ENCODE measurements at regions of chr5 and their contacts with region 1.

Region 1: DNA sequence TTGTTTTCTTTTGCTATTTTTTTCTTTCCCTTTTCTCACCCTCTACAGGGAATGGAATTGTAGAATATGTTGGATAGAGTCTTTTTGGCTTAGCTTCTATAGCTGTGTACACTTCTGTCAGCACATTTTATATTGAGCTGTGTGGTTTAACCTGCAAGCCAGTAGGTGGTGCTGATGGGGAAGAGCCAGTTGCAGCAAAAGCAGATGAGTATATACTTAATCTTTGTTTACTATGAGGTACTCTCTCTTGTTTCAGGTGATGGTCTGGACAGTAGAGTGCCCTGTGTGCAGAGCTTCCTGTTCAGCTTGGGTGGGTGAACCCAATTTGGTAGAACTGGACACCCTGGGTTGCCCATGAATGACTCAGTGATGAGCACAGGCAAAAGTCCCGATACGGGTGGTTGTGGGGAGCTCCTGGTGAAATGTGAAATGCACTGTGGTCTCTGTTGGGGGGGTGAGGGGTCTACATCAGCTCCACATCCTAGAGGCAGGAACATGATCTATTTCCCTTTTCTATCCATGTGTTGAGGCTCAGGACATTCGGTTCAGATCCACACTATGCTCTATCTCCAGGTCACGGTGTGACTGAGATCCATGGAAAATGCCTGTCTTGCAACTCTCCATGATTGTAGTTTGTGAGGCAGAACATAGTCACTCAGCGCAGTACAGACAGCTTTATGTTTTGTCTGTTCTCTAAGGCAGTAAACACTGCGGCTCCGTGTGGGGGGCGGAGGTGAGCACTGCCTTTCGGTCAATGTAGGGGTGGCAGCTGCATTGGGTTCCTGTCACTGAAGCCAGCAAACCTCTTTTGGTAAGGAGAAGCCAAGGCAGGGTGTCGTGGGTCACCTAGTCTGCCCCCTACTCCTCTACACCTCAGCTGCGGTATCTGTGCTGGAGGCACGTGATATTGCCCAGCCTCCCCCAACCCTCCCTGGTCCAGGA is 353.2 kb downstream of the PRR16 start:
- DNase-seq: peak in 1 of 2 experiments; percentile 53
- H3K4me3 ChIP-seq: no peak overlapping the region
- H3K27ac ChIP-seq: no peak overlapping the region
- H3K4me1 ChIP-seq: no peaks in the 10 kb centered on the region
- H3K27me3 ChIP-seq: no peaks in the 10 kb centered on the region
- CTCF ChIP-seq: peak in 2 of 3 experiments; percentile 68 to 71; a peak in 3 of 4 replicates
- EP300 ChIP-seq: no peak
- POLR2A ChIP-seq: no peak
- RAD21 ChIP-seq: peak; percentile 84 to 85

Region 2: DNA sequence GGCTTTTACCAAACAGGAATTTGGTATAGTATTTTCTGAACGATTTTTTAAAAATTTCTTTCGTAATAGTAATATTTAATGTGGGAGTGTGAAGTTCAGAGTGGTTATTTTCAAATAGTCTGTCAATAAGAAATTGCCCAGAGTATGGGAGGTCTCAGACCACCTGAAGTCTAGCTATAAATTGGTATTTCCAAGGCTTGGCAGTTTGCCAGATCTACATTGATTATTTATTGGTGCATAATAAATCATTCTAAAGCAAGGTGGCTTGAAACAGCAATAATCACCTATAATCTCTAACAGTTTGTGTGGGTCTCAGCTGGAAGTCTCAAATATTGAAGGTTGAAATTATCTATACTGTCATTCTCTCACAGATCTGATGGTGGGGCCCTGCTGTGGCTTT is 234.7 kb before region 1 on chr5:
- CTCF ChIA-PET with region 1: no interaction called
- POLR2A ChIA-PET with region 1: no interaction called
- DNase-seq: no peak
- H3K4me3 ChIP-seq: no peak overlapping the region
- H3K27ac ChIP-seq: no peak overlapping the region
- H3K4me1 ChIP-seq: no peaks in the 10 kb centered on the region
- H3K27me3 ChIP-seq: no peaks in the 10 kb centered on the region
- CTCF ChIP-seq: no peak
- EP300 ChIP-seq: no peak
- POLR2A ChIP-seq: no peak
- RAD21 ChIP-seq: no peak

Region 3: DNA sequence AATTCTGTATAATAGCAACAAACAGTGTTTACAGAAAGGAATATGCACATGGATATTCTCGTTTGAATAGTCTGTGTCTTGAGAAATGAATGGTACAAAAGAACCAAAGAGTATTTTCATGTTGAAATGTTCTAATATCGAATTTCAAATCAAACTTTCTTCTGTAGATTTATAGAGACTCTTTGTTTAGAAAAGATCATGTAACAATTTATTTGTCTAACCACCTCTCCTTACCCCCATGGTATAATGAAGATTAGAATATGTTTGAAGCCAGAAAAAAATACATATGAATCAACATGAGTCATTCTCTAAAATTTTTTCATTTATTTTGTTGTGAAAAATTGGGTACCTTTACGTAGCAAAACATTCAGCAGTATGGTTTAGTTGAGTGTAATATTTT is 67.6 kb before region 1 on chr5:
- CTCF ChIA-PET with region 1: no interaction called
- POLR2A ChIA-PET with region 1: no interaction called
- DNase-seq: no peak
- H3K4me3 ChIP-seq: no peak overlapping the region
- H3K27ac ChIP-seq: no peak overlapping the region
- H3K4me1 ChIP-seq: no peaks in the 10 kb centered on the region
- H3K27me3 ChIP-seq: no peaks in the 10 kb centered on the region
- CTCF ChIP-seq: no peak
- EP300 ChIP-seq: no peak
- POLR2A ChIP-seq: no peak
- RAD21 ChIP-seq: no peak

Region 4: DNA sequence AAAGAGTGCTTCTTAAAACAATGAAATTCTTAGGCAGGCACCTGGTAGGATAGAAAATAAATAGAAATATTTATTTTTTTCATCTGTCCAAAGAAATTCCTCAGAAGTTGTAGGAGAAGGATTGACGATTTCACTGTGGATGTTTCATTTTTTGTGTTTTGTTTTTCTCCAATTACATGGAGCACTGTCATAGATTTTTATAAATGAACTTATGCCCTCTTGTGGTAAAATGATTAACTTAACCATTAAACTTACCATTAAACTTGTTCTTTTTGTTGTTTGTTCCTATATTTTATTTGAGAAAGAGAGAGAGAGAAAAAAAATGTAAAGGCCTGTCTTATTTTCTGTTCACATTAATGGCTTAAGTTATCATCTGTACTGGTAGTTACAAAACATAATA is 14.0 kb before region 1 on chr5:
- CTCF ChIA-PET with region 1: interaction called, 10 read pairs
- POLR2A ChIA-PET with region 1: no interaction called
- DNase-seq: no peak
- H3K4me3 ChIP-seq: no peak overlapping the region
- H3K27ac ChIP-seq: no peak overlapping the region
- H3K4me1 ChIP-seq: no peaks in the 10 kb centered on the region; a peak in 1 of 7 replicates
- H3K27me3 ChIP-seq: no peaks in the 10 kb centered on the region
- CTCF ChIP-seq: peak in 1 of 3 experiments; percentile 24; a peak in 2 of 4 replicates
- EP300 ChIP-seq: no peak
- POLR2A ChIP-seq: no peak
- RAD21 ChIP-seq: peak in 1 of 2 experiments; percentile 49

Region 5: GRCh38 chr5:120852222-120852860 is 35.0 kb after region 1 on chr5:
- CTCF ChIA-PET with region 1: interaction called, 10 read pairs
- POLR2A ChIA-PET with region 1: no interaction called
- DNase-seq: no peak
- H3K4me3 ChIP-seq: 0 out of 8 replicates have a peak overlapping the region, but pooled peaks of 1 of the 4 experiments have one; percentile 15
- H3K27ac ChIP-seq: no peak overlapping the region
- H3K4me1 ChIP-seq: peaks cover 2 to 20% (median 13%) of the 10 kb centered on the region in 4 experiments; a peak in 6 of 7 replicates
- H3K27me3 ChIP-seq: 0 out of 7 replicates have a peak, but pooled peaks cover 0 to 5% (median 2%) of the 10 kb centered on the region in 4 experiments
- CTCF ChIP-seq: no peak
- EP300 ChIP-seq: no peak
- POLR2A ChIP-seq: no peak
- RAD21 ChIP-seq: no peak

Measured in H1 (cell line).